GM23248 (cell line): ENCODE measurements at regions of chr3 and their contacts with region 1.

Region 1: DNA sequence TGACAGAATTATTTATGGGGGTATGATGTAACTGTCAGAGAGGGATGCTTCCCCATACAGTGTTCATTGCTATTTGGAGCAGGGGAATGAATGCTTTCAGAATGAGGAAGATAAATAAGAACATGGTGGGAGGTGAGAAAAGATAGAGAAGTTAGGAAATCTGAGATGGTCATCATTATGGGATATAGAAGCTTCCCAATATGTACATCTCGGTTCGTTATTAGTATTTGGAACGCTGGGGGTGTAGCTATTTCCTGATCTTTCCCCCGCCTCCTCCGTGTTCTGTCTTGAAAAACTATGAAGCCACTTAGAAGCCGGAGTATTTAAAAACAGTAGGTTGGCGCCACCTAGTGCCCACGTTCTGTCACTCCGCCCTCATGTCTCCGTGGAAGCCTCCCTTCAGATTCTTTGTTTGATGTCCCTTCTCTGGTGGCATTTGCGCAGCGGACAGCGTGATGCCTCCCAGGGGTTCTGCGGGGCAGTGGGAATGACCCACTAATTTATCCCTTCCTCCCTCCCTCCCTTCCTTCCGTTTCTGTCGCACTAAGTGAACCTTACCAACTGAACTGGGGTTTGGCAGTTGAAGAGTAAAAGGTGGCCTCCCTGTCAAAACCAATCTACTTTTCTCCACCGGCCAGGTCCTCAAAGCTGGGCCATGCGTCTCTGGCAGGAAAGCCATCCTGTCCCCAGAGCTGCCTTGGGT is 184.5 kb downstream of the FEZF2 start:
- DNase-seq: peak; percentile 83
- H3K4me3 ChIP-seq: peak overlapping the region; percentile 58
- H3K27ac ChIP-seq: no peak overlapping the region
- H3K4me1 ChIP-seq: peaks cover 6% of the 10 kb centered on the region; the same call in 1 of the 2 replicates
- H3K27me3 ChIP-seq: no peaks in the 10 kb centered on the region

Region 2: GRCh38 chr3:60594025-60594424 is 1594.8 kb before region 1 on chr3:
- in situ Hi-C with region 1: loop called (anchors 25 kb)
- DNase-seq: no peak
- H3K4me3 ChIP-seq: no peak overlapping the region
- H3K27ac ChIP-seq: no peak overlapping the region
- H3K4me1 ChIP-seq: peaks cover 10% of the 10 kb centered on the region; the same call in 1 of the 2 replicates
- H3K27me3 ChIP-seq: no peaks in the 10 kb centered on the region

Region 3: GRCh38 chr3:61561374-61562041 is 627.3 kb before region 1 on chr3 and contains the start of gene PTPRG:
- in situ Hi-C with region 1: loop called (anchors 10 kb)
- DNase-seq: peak; percentile 98
- H3K4me3 ChIP-seq: peak within 1 kb of the TSS; percentile 89
- H3K27ac ChIP-seq: peak within 1 kb of the TSS; percentile 83
- H3K4me1 ChIP-seq: peaks cover 18% of the 10 kb centered on the region
- H3K27me3 ChIP-seq: no peaks in the 10 kb centered on the region
- total RNA-seq, gene PTPRG: 39.6 and 51.3 TPM in 2 replicates

Region 4: DNA sequence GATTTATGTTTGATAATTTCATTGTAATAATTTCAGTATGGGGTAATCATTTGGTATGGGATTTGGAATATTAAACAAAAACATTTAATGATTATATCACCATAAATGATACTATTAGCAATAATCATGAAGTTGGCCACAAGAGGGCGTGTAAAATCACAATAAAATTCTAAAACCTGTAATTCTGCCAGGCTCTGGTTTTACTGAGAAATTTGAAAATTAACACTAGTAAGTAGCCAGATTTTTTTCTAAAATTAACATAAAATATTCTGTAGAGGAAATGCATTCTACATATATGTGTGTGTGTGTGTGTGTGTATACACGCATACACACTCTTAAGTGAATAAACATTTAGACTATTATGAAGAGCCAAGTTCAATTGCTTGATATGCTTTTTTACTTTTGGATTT is 144.0 kb after region 1 on chr3:
- in situ Hi-C with region 1: no loop called
- DNase-seq: peak; percentile 65
- H3K4me3 ChIP-seq: no peak overlapping the region
- H3K27ac ChIP-seq: no peak overlapping the region
- H3K4me1 ChIP-seq: no peaks in the 10 kb centered on the region
- H3K27me3 ChIP-seq: no peaks in the 10 kb centered on the region